ENCODE measurements at regions of chr15 and their contacts with region 1.

Region 1: DNA sequence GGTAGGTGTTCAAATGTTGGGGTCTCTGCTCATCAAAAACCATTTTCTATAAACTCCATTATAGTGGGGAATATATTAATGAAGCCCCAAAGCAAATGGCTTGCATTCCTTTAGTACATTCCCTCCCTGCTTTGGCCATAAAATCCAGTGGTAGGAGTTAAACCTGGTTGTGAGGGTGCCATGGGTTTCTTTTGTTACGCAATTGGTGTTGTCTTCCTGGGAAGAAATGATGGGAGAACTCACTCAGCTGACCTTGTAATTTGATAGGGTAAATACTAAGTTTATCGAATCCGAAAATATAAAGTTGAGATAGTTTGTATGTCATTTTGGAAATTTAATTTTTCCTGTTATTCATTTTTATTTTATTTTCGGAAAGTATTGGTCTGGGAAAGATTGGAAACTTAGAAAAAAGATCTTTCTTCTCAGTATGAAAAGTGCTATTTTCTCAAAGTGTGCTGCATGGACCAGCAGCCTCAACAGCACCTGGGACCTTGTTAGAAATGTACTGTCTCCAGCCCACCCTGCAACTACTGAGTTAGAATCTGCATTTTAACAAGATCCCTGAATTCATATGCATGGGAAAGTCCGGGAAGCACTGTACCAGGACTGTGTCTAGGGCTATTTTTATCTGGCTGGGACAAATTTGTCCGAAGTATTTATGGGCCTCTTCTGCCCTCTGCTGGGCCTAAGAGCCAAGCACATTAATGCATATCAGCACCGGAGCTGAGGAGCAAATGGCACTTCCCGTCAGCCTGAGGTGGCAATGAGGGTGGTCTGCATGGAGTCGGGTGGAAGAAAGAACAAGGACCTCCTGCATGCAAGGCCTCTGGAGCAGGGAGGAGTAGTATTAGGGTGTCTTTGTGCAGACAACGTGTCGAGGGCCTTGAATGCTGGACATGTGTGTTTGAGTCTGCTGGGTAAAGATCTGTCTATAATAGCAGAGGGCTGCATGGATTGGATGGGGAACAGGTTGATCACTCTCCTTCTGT is 54.7 kb downstream of the FAM81A start:
- DNase-seq: peak; percentile 62 to 66
- H3K4me3 ChIP-seq: no peak overlapping the region
- H3K27ac ChIP-seq: no peak overlapping the region
- H3K4me1 ChIP-seq: no peaks in the 10 kb centered on the region
- H3K27me3 ChIP-seq: no peaks in the 10 kb centered on the region
- CTCF ChIP-seq: peak; percentile 69 to 91 (median 80)
- POLR2A ChIP-seq: no peak

Region 2: GRCh38 chr15:58977887-58978286 is 514.8 kb before region 1 on chr15:
- intact Hi-C with region 1: loop called (anchors 10 kb)
- DNase-seq: no peak
- H3K4me3 ChIP-seq: no peak overlapping the region
- H3K27ac ChIP-seq: no peak overlapping the region
- H3K4me1 ChIP-seq: no peaks in the 10 kb centered on the region
- H3K27me3 ChIP-seq: no peaks in the 10 kb centered on the region
- CTCF ChIP-seq: no peak
- POLR2A ChIP-seq: no peak

Region 3: GRCh38 chr15:59420986-59421618 is 71.6 kb before region 1 on chr15:
- intact Hi-C with region 1: no loop called
- DNase-seq: no peak
- H3K4me3 ChIP-seq: no peak overlapping the region
- H3K27ac ChIP-seq: no peak overlapping the region
- H3K4me1 ChIP-seq: no peaks in the 10 kb centered on the region
- H3K27me3 ChIP-seq: no peaks in the 10 kb centered on the region
- CTCF ChIP-seq: no peak
- POLR2A ChIP-seq: no peak